CD8-positive, alpha-beta memory T cell (primary cell): ENCODE measurements at regions of chr3 and their contacts with region 1.

Region 1: GRCh38 chr3:139329345-139329850 is 14.4 kb upstream of the MRPS22 start:
- DNase-seq: peak; percentile 76 to 88 (median 81)
- H3K4me3 ChIP-seq: peak overlapping the region; percentile 55
- H3K4me3 Mint-ChIP-seq: peak overlapping the region in 6 of 7 donors; percentile 69 to 86 (median 75)
- H3K27ac ChIP-seq: no peak overlapping the region
- H3K27ac Mint-ChIP-seq: peak overlapping the region in 3 of 8 donors; percentile 50 to 60 (median 52)
- H3K4me1 ChIP-seq: peaks cover 11% of the 10 kb centered on the region
- H3K4me1 Mint-ChIP-seq: peaks cover 7 to 25% (median 7%) of the 10 kb centered on the region in 3 donors
- H3K27me3 ChIP-seq: no peaks in the 10 kb centered on the region
- H3K27me3 Mint-ChIP-seq: peaks cover 22 to 36% of the 10 kb centered on the region in 2 donors

Region 2: GRCh38 chr3:138694287-138695007 is 635.0 kb before region 1 on chr3:
- CTCF ChIA-PET with region 1: no interaction called
- POLR2A ChIA-PET with region 1: no interaction called
- DNase-seq: no peak
- H3K4me3 ChIP-seq: no peak overlapping the region
- H3K4me3 Mint-ChIP-seq: no peak overlapping the region
- H3K27ac ChIP-seq: peak overlapping the region; percentile 33
- H3K27ac Mint-ChIP-seq: peak overlapping the region in 2 of 8 donors; percentile 24 to 26
- H3K4me1 ChIP-seq: no peaks in the 10 kb centered on the region
- H3K4me1 Mint-ChIP-seq: no peaks in the 10 kb centered on the region
- H3K27me3 ChIP-seq: no peaks in the 10 kb centered on the region
- H3K27me3 Mint-ChIP-seq: no peaks in the 10 kb centered on the region

Region 3: GRCh38 chr3:139111392-139112229 is 217.8 kb before region 1 on chr3:
- CTCF ChIA-PET with region 1: interaction called, 12 read pairs
- POLR2A ChIA-PET with region 1: no interaction called
- DNase-seq: peak; percentile 19 to 59 (median 23)
- H3K4me3 ChIP-seq: no peak overlapping the region
- H3K4me3 Mint-ChIP-seq: peak overlapping the region in 1 of 7 donors; percentile 15
- H3K27ac ChIP-seq: no peak overlapping the region
- H3K27ac Mint-ChIP-seq: no peak overlapping the region
- H3K4me1 ChIP-seq: no peaks in the 10 kb centered on the region
- H3K4me1 Mint-ChIP-seq: peaks cover 8 to 22% (median 20%) of the 10 kb centered on the region in 3 donors
- H3K27me3 ChIP-seq: no peaks in the 10 kb centered on the region
- H3K27me3 Mint-ChIP-seq: peaks cover 7 to 24% of the 10 kb centered on the region in 2 donors

Region 4: GRCh38 chr3:139317665-139318430 is 11.6 kb before region 1 on chr3:
- CTCF ChIA-PET with region 1: interaction called, 11 read pairs
- POLR2A ChIA-PET with region 1: no interaction called
- DNase-seq: no peak
- H3K4me3 ChIP-seq: no peak overlapping the region
- H3K4me3 Mint-ChIP-seq: no peak overlapping the region
- H3K27ac ChIP-seq: no peak overlapping the region
- H3K27ac Mint-ChIP-seq: no peak overlapping the region
- H3K4me1 ChIP-seq: no peaks in the 10 kb centered on the region
- H3K4me1 Mint-ChIP-seq: no peaks in the 10 kb centered on the region
- H3K27me3 ChIP-seq: no peaks in the 10 kb centered on the region
- H3K27me3 Mint-ChIP-seq: peaks cover 21 to 38% of the 10 kb centered on the region in 2 donors

Region 5: DNA sequence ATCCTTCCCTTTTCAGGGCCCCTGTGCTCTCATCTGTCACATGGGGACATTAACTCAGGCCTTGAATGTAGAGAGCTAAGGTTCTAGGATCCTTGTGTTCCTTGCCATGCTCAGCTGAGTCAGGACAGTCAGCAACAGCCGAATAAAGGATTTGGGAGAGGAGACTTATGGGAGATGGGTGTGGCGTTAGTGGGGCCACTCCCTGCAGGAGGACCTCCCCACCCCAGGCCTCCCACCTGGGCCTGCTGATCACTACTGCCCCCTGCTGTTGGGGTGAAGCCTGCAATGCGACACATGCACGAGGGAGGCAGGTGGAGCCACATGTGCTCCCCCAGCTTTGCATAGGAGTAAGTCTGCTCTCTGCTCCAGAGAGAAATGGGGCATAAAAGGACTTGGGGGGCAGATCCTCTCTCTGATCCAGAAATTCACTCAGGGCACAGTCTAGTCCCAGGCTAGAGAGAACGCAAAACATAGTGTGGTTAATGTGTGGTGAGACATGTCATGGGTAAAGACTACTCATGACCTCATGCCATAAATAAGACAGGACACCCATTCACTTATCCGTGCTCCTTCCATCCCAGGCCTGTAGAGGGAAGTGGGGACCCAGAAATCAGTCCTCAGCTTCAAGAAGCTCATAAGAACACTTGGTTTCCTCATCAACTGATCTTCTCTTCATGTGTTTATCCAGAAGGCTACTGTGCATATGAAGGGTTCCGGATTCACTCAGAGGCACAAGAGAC is 190.8 kb after region 1 on chr3:
- CTCF ChIA-PET with region 1: no interaction called
- POLR2A ChIA-PET with region 1: no interaction called
- DNase-seq: no peak
- H3K4me3 ChIP-seq: no peak overlapping the region
- H3K4me3 Mint-ChIP-seq: no peak overlapping the region
- H3K27ac ChIP-seq: no peak overlapping the region
- H3K27ac Mint-ChIP-seq: no peak overlapping the region
- H3K4me1 ChIP-seq: no peaks in the 10 kb centered on the region
- H3K4me1 Mint-ChIP-seq: no peaks in the 10 kb centered on the region
- H3K27me3 ChIP-seq: peaks cover 2% of the 10 kb centered on the region
- H3K27me3 Mint-ChIP-seq: peaks cover 4 to 5% of the 10 kb centered on the region in 2 donors